ENCODE measurements at regions of chrX and their contacts with region 1.

Region 1: GRCh38 chrX:138775517-138775916 is 64.0 kb upstream of the FGF13 start:
- DNase-seq: peak; percentile 23 to 34 (median 26)
- ATAC-seq: peak; percentile 77
- H3K4me3 ChIP-seq: no peak overlapping the region
- H3K27ac ChIP-seq: no peak overlapping the region
- H3K4me1 ChIP-seq: peaks cover 0 to 2% of the 10 kb centered on the region in 2 experiments; a peak in 1 of 5 replicates
- H3K27me3 ChIP-seq: no peaks in the 10 kb centered on the region
- CTCF ChIP-seq: peak; percentile 23 to 59 (median 28); a peak in 3 of 6 replicates
- EP300 ChIP-seq: no peak
- POLR2A ChIP-seq: no peak
- RAD21 ChIP-seq: peak; percentile 42 to 52

Region 2: DNA sequence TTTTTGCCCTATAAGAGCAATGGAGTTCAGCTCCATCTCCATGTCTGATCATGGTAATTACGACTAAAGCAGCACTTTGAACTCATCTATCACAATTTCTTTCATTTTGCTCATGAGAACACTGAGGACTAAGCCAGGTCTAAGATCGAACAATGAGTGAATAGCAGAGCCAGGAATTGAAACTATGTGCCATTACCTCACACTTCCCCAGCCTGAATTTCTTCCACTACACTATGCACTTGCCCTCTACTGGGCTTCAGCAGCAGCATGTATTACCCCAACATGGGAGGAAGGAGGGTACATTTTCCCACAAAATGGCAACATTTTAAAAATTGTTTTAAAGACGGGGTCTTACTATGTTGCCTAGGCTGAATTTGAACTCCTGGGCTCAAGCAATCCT is 210.7 kb after region 1 on chrX:
- CTCF ChIA-PET with region 1: no interaction called
- POLR2A ChIA-PET with region 1: interaction called, 3 read pairs
- in situ Hi-C with region 1: no loop called
- intact Hi-C with region 1: loop called (anchors 10 kb)
- DNase-seq: no peak
- ATAC-seq: peak; percentile 36; the same call in 2 of the 3 replicates
- H3K4me3 ChIP-seq: no peak overlapping the region
- H3K27ac ChIP-seq: no peak overlapping the region
- H3K4me1 ChIP-seq: peaks cover 0 to 8% of the 10 kb centered on the region in 2 experiments; a peak in 1 of 5 replicates
- H3K27me3 ChIP-seq: no peaks in the 10 kb centered on the region
- CTCF ChIP-seq: no peak
- EP300 ChIP-seq: no peak
- POLR2A ChIP-seq: no peak
- RAD21 ChIP-seq: no peak

Region 3: GRCh38 chrX:139126493-139126892 is 351.0 kb after region 1 on chrX:
- CTCF ChIA-PET with region 1: no interaction called
- POLR2A ChIA-PET with region 1: no interaction called
- in situ Hi-C with region 1: no loop called
- intact Hi-C with region 1: loop called (anchors 1 kb)
- DNase-seq: peak; percentile 60 to 72 (median 68)
- ATAC-seq: peak; percentile 100
- H3K4me3 ChIP-seq: no peak overlapping the region
- H3K27ac ChIP-seq: no peak overlapping the region
- H3K4me1 ChIP-seq: no peaks in the 10 kb centered on the region
- H3K27me3 ChIP-seq: no peaks in the 10 kb centered on the region
- CTCF ChIP-seq: peak; percentile 83 to 98 (median 94)
- EP300 ChIP-seq: no peak
- POLR2A ChIP-seq: no peak
- RAD21 ChIP-seq: peak; percentile 79 to 85

Region 4: GRCh38 chrX:139332441-139332840 is 556.9 kb after region 1 on chrX:
- CTCF ChIA-PET with region 1: no interaction called
- POLR2A ChIA-PET with region 1: interaction called, 3 read pairs
- in situ Hi-C with region 1: no loop called
- intact Hi-C with region 1: loop called (anchors 10 kb)
- DNase-seq: no peak
- ATAC-seq: no peak
- H3K4me3 ChIP-seq: no peak overlapping the region
- H3K27ac ChIP-seq: no peak overlapping the region
- H3K4me1 ChIP-seq: no peaks in the 10 kb centered on the region
- H3K27me3 ChIP-seq: no peaks in the 10 kb centered on the region
- CTCF ChIP-seq: no peak
- EP300 ChIP-seq: no peak
- POLR2A ChIP-seq: no peak
- RAD21 ChIP-seq: no peak

Region 5: DNA sequence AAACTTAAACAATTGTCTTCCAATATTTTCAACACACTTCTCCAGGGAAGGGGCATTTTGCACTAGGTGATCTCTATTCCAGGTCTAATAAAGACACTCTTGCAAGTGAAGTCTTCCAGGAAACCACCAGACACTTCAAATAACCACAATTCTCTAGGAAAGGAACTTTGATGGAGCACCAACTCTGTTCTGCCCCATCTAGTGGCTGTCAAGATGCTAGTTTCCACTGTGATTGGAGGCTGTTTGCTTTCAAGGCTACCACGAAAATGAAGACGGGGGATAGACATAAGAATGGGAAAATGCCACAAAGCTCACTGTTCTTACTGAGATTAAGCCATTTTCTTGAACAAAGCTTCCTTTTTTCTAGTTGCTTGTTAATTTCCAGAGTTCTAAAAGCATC is 654.4 kb after region 1 on chrX:
- CTCF ChIA-PET with region 1: no interaction called
- POLR2A ChIA-PET with region 1: no interaction called
- in situ Hi-C with region 1: no loop called
- intact Hi-C with region 1: loop called (anchors 5 kb)
- DNase-seq: peak in 1 of 4 experiments; percentile 9
- ATAC-seq: 0 out of 3 replicates have a peak, but pooled peaks have one; percentile 36
- H3K4me3 ChIP-seq: no peak overlapping the region
- H3K27ac ChIP-seq: no peak overlapping the region
- H3K4me1 ChIP-seq: no peaks in the 10 kb centered on the region
- H3K27me3 ChIP-seq: no peaks in the 10 kb centered on the region
- CTCF ChIP-seq: peak; percentile 20 to 29 (median 21); a peak in 3 of 6 replicates
- EP300 ChIP-seq: no peak
- POLR2A ChIP-seq: no peak
- RAD21 ChIP-seq: peak; percentile 38 to 51

Region 6: GRCh38 chrX:139559383-139560042 is 784.0 kb after region 1 on chrX:
- CTCF ChIA-PET with region 1: interaction called, 9 read pairs
- POLR2A ChIA-PET with region 1: no interaction called
- in situ Hi-C with region 1: loop called (anchors 25 kb)
- intact Hi-C with region 1: loop called (anchors 5 kb)
- DNase-seq: peak; percentile 4 to 64 (median 18)
- ATAC-seq: peak; percentile 88
- H3K4me3 ChIP-seq: no peak overlapping the region
- H3K27ac ChIP-seq: no peak overlapping the region
- H3K4me1 ChIP-seq: no peaks in the 10 kb centered on the region
- H3K27me3 ChIP-seq: peaks cover 2 to 17% of the 10 kb centered on the region in 2 experiments; a peak in 3 of 5 replicates
- CTCF ChIP-seq: peak; percentile 42 to 66 (median 57); a peak in 5 of 6 replicates
- EP300 ChIP-seq: no peak
- POLR2A ChIP-seq: no peak
- RAD21 ChIP-seq: peak; percentile 66 to 78

Measured in K562 (cell line).